Transverse colon (tissue), 4 donors: ENCODE measurements at regions of chr6 and their contacts with region 1.

Region 1: DNA sequence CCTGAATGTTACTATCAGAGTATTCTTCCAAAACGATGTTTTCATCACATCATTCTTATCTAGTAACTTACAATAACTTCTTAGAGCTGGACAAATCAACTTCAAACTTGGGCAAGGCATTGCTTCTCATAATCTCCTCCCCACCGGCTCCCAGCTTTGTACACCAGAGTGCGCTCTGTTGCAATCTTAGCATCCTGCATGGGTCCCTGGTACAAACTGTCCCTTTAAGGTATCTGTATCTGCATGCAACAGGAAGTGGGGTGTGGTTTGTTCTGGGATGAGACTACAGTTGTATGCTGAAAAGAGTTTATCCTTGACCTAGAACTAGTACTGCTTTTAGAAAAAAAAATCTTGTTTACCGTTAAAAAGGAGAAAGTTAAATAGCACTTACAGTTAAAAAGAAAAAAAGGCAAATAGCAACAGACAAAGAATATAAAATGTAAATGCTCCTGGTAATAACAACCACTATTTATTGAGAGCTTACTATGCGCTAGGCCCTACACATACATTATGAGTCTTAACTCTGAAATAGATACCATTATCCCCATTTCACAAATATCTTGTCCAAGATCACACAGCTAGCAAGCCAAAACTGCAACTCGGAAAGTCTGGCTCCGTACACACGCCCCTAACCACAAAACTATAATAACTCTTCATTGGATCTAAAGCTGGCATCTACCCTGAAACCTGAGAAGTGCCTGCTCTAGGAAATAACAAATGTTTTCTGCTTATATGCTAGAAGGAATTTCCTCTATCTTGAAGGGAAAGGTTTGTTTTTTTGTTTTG is 9.8 kb upstream of the HECA start:
- DNase-seq: peak; percentile 82
- H3K4me3 ChIP-seq: no peak overlapping the region
- H3K27ac ChIP-seq: peak overlapping the region; percentile 19 to 58 (median 36)
- H3K4me1 ChIP-seq: peaks cover 0 to 6% (median 0%) of the 10 kb centered on the region in 4 donors
- H3K27me3 ChIP-seq: no peaks in the 10 kb centered on the region
- CTCF ChIP-seq: peak; percentile 36 to 67 (median 55)
- EP300 ChIP-seq: no peak
- POLR2A ChIP-seq: no peak

Region 2: DNA sequence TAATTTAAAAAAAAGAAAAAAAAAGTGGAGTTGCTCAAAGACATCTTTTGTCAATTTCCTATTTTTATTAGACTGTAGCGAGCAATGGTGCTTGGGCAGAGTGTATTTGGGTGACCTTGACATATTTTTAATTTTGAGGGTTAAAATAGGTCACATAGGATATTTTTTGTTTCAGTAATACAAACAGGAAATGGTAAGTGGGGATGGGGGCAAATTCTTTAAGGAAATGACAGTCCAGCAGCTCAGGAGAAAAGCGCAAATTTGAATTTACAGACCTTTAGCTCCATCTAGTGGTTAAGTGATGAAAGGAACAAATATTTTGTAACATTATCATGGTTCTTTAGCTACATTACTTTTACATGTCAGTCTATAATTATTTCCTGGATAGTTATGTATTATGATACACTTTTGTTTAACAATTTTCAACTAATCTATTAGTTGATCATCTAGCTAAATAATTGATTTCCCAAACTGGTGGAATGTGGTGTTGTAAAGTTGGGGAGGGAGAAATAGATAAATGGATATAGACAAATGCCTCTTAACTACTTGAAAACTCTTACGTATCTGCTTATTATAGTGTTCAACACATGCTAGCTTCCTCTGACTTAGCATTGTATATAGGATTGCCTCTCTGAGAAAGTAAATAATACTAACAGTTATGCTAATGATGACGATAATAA is 239.4 kb after region 1 on chr6:
- in situ Hi-C with region 1: loop called in 2 of 4 experiments (anchors 5 to 10 kb)
- intact Hi-C with region 1: no loop called
- DNase-seq: no peak
- H3K4me3 ChIP-seq: no peak overlapping the region
- H3K27ac ChIP-seq: no peak overlapping the region
- H3K4me1 ChIP-seq: peaks cover 0 to 6% (median under 1%) of the 10 kb centered on the region in 4 donors
- H3K27me3 ChIP-seq: no peaks in the 10 kb centered on the region
- CTCF ChIP-seq: peak; percentile 71 to 88 (median 73)
- EP300 ChIP-seq: no peak
- POLR2A ChIP-seq: no peak

Region 3: GRCh38 chr6:139369568-139370282 is 244.6 kb after region 1 on chr6:
- in situ Hi-C with region 1: loop called in 2 of 4 experiments (anchors 5 to 10 kb)
- intact Hi-C with region 1: no loop called
- DNase-seq: no peak
- H3K4me3 ChIP-seq: peak overlapping the region in 1 of 4 donors; percentile 87
- H3K27ac ChIP-seq: peak overlapping the region; percentile 92 to 99 (median 96)
- H3K4me1 ChIP-seq: peaks cover 7 to 31% (median 23%) of the 10 kb centered on the region in 4 donors
- H3K27me3 ChIP-seq: no peaks in the 10 kb centered on the region
- CTCF ChIP-seq: peak; percentile 70 to 80 (median 75)
- EP300 ChIP-seq: no peak
- POLR2A ChIP-seq: no peak